Adrenal gland (tissue), 19 donors: ENCODE measurements at regions of chr4 and their contacts with region 1.

Region 1: GRCh38 chr4:186587416-186588018 is 32.1 kb upstream of the MTNR1A start:
- DNase-seq: peak; percentile 38 to 88 (median 80)
- H3K4me3 ChIP-seq: no peak overlapping the region
- H3K27ac ChIP-seq: no peak overlapping the region
- H3K4me1 ChIP-seq: no peaks in the 10 kb centered on the region
- H3K27me3 ChIP-seq: no peaks in the 10 kb centered on the region
- CTCF ChIP-seq: peak; percentile 65 to 96 (median 75)
- POLR2A ChIP-seq: no peak

Region 2: GRCh38 chr4:186297013-186297645 is 290.4 kb before region 1 on chr4:
- intact Hi-C with region 1: loop called (anchors 5 to 10 kb)
- DNase-seq: no peak
- H3K4me3 ChIP-seq: no peak overlapping the region
- H3K27ac ChIP-seq: no peak overlapping the region
- H3K4me1 ChIP-seq: no peaks in the 10 kb centered on the region
- H3K27me3 ChIP-seq: peaks cover 18% of the 10 kb centered on the region
- CTCF ChIP-seq: peak; percentile 50 to 73 (median 60)
- POLR2A ChIP-seq: no peak

Region 3: DNA sequence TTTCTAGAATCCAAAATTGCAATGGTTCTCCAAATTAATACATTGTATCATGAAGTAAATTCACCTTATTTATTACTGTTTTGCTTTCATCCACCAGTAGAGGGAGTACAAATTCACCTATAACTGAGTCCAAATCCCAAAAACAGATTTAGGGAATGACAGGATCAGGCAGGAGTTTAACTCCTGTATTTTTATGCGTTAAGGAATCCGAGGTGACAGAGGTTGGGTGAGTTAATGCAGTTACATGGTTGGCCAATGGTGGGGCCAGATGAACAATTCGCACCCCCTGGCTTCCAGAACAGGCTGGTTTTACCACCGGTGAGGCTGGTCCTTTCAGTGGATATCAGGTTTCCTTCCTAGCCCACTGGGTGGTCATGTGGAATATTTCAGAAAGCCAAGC is 114.6 kb before region 1 on chr4:
- intact Hi-C with region 1: loop called in 1 of 2 experiments (anchors 10 kb)
- DNase-seq: no peak
- H3K4me3 ChIP-seq: no peak overlapping the region
- H3K27ac ChIP-seq: no peak overlapping the region
- H3K4me1 ChIP-seq: no peaks in the 10 kb centered on the region
- H3K27me3 ChIP-seq: peaks cover 12% of the 10 kb centered on the region
- CTCF ChIP-seq: peak; percentile 14 to 61 (median 39)
- POLR2A ChIP-seq: no peak

Region 4: GRCh38 chr4:186889876-186890643 is 302.5 kb after region 1 on chr4:
- intact Hi-C with region 1: no loop called
- DNase-seq: no peak
- H3K4me3 ChIP-seq: no peak overlapping the region
- H3K27ac ChIP-seq: no peak overlapping the region
- H3K4me1 ChIP-seq: no peaks in the 10 kb centered on the region
- H3K27me3 ChIP-seq: no peaks in the 10 kb centered on the region
- CTCF ChIP-seq: no peak
- POLR2A ChIP-seq: no peak